Adrenal gland (tissue), 19 donors: ENCODE measurements at regions of chr1 and their contacts with region 1.

Region 1: GRCh38 chr1:184419728-184420161 is 32.9 kb downstream of the C1orf21 start:
- DNase-seq: peak in 1 of 7 donors; percentile 34
- H3K4me3 ChIP-seq: no peak overlapping the region
- H3K27ac ChIP-seq: peak overlapping the region in 1 of 5 donors; percentile 30
- H3K4me1 ChIP-seq: peaks cover 24 to 67% of the 10 kb centered on the region in 2 donors
- H3K27me3 ChIP-seq: no peaks in the 10 kb centered on the region
- CTCF ChIP-seq: no peak
- POLR2A ChIP-seq: no peak

Region 2: DNA sequence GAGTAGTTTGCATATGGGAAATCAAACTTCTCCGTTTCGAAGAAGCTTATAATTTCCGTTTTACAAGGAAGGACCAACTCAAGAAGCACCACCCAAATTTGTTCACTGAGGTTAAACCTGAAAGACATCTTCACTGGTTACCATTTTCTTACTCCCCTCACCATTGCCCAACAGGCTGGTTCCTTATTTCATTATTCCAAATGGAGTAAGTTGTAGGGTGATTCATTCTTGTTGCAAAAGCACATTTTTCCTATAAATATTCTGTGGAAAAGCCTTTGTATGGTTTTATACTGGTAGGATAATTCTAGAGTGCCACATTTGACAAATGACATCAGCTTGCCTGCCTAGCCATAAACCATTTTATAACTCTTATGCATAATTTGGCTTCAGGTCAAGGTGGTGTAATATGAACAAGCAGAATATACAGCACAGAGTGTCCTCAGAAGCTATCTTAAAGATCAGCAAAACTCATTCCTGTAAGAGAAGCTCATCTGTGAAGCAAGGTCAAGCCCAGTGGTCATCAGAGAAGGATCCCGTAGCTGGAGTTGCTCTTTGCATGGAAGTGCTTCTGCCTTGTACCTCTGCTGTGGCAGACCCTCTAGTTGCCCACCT is 57.0 kb before region 1 on chr1:
- intact Hi-C with region 1: no loop called
- DNase-seq: no peak
- H3K4me3 ChIP-seq: no peak overlapping the region
- H3K27ac ChIP-seq: no peak overlapping the region
- H3K4me1 ChIP-seq: no peaks in the 10 kb centered on the region
- H3K27me3 ChIP-seq: no peaks in the 10 kb centered on the region
- CTCF ChIP-seq: no peak
- POLR2A ChIP-seq: no peak

Region 3: GRCh38 chr1:184472136-184472535 is 52.4 kb after region 1 on chr1:
- intact Hi-C with region 1: loop called in 1 of 2 experiments (anchors 10 kb)
- DNase-seq: no peak
- H3K4me3 ChIP-seq: no peak overlapping the region
- H3K27ac ChIP-seq: peak overlapping the region in 1 of 5 donors; percentile 67
- H3K4me1 ChIP-seq: peaks cover 0 to 13% of the 10 kb centered on the region in 2 donors
- H3K27me3 ChIP-seq: no peaks in the 10 kb centered on the region
- CTCF ChIP-seq: no peak
- POLR2A ChIP-seq: no peak